ENCODE measurements at regions of chr1 and their contacts with region 1.

Region 1: GRCh38 chr1:100277866-100278265 is 11.8 kb downstream of the RTCA start:
- DNase-seq: no peak
- ATAC-seq: peak; percentile 49
- H3K4me3 Mint-ChIP-seq: no peak overlapping the region
- H3K27ac Mint-ChIP-seq: no peak overlapping the region
- H3K4me1 Mint-ChIP-seq: peaks cover 2% of the 10 kb centered on the region
- H3K27me3 Mint-ChIP-seq: no peaks in the 10 kb centered on the region
- CTCF ChIP-seq: no peak

Region 2: DNA sequence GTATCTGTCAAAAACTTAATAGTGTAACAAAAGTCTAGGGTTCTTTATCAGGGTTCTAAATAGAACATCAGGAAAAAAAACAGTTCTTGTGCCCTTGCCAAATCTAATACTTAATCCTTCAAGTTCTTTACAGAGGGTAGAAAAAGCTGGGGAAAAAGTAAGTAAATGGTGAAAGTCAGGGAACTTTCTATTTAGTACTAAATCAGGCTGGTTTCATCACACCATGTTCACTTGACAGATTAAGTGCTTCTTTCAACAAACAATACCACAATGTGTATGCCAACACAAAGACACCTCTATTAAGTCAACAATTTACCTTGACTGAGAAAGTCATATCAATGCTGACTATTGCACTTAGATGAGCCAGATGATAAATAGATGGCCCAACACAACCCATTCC is 37.9 kb before region 1 on chr1:
- CTCF ChIA-PET with region 1: no interaction called
- POLR2A ChIA-PET with region 1: no interaction called
- intact Hi-C with region 1: loop called (anchors 5 kb)
- DNase-seq: no peak
- ATAC-seq: no peak
- H3K4me3 Mint-ChIP-seq: no peak overlapping the region
- H3K27ac Mint-ChIP-seq: no peak overlapping the region
- H3K4me1 Mint-ChIP-seq: peaks cover 4% of the 10 kb centered on the region
- H3K27me3 Mint-ChIP-seq: no peaks in the 10 kb centered on the region
- CTCF ChIP-seq: no peak

Region 3: DNA sequence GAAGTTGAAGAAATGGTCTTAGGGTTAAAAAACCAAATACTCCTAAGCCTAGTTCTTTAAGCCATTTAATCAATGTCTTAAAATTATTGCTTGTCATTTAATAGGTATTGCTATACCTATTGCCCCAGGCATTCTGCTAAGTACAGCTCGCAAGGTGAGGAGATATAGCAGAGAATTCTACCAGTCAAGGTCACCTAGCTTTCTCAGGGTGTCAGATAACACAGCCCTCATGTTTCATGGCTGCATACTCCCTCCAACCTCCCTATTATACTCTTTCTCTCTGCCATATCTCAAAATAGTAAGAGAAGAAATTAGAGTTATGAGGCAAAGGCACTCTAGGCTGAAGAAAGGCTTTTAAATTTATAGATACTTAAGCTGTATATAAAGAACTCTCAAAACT is 191.7 kb after region 1 on chr1:
- CTCF ChIA-PET with region 1: no interaction called
- POLR2A ChIA-PET with region 1: no interaction called
- intact Hi-C with region 1: no loop called
- DNase-seq: no peak
- ATAC-seq: no peak
- H3K4me3 Mint-ChIP-seq: no peak overlapping the region
- H3K27ac Mint-ChIP-seq: no peak overlapping the region
- H3K4me1 Mint-ChIP-seq: no peaks in the 10 kb centered on the region
- H3K27me3 Mint-ChIP-seq: no peaks in the 10 kb centered on the region
- CTCF ChIP-seq: no peak

Measured in activated B cell treated with CpG ODN at 0.5 μM for 24 hours (primary cell).